ENCODE measurements at regions of chr15 and their contacts with region 1.

Region 1: DNA sequence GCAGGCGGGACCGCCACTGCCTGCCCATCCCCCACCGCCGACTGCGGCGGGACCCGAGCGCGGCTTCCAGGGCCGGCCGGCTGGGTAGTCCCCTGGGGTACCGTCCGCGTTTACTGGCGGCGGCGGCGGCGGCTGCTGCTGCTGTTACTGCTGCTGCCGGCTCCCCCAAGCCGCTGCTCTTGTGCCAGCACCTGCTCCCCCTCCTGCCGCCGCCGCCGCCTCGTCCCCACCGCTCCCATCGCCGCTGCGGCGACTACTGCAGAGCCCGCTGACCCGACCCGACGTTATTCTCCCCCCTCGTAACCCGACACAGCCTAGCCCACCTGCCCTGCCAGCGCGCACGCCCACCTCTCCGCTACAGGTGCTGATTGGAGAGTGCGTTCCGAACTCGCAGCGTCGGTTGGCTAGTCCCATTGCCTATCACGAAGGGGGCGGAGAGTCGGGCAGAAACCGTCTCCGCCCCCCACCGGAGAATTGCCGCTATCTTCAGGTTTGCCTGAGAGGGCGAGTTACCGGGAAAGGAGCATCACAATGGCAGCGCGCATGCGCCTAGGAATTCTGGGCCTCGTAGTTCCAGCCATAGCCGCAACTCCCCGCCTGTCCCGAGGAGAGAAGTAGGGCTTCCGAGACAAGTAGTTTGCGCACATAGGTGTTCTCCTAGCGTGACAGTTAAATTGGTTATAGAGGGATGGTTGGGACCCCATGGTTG is at the start of gene TTBK2:
- H3K4me3 ChIP-seq: peak within 1 kb of the TSS; percentile 79
- H3K27ac ChIP-seq: peak within 1 kb of the TSS; percentile 72
- H3K4me1 ChIP-seq: no peaks in the 10 kb centered on the region
- CTCF ChIP-seq: no peak

Region 2: GRCh38 chr15:42704492-42704926 is 216.2 kb before region 1 on chr15:
- CTCF ChIA-PET with region 1: interaction called, 10 read pairs
- POLR2A ChIA-PET with region 1: no interaction called
- H3K4me3 ChIP-seq: no peak overlapping the region
- H3K27ac ChIP-seq: no peak overlapping the region
- H3K4me1 ChIP-seq: no peaks in the 10 kb centered on the region
- CTCF ChIP-seq: peak; percentile 30; the same call in 1 of the 2 replicates

Region 3: DNA sequence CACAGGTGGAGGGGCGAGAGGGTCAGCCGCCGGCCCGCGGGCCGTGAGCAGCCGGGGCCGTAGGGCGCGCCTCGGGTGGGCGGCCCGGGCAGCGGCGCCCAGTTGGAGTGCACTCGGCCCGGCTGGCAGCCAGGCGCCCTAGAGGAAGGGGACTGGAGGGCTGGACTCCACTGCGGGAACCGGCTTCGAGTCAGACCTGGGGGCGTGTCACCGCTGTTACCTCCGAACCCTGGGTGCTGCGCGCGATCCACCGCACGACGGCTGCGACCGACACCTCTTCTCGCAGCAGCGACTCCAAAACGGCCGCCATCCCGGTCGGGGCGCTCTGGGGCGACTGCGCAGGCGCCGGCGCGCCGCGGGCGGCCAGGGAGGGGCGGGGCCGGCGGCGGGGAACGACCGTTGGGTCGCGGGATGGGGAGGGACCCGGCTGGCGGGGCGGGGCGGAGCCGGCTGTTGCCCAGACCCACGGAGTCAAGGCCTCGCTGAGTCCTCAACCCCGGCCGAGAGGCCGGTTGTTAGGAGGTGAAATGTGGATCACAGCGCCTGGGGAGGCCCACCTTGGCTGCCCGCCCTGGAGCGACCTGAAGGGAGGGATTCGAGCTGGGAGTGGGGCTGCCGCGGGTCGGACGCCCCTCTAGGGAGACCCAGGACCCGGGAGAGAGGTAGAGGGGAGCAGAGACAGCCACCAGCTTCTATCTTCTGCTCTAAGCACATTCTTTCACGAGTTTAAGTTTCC is 183.7 kb before region 1 on chr15 and contains the start of gene CDAN1:
- CTCF ChIA-PET with region 1: interaction called, 33 read pairs
- POLR2A ChIA-PET with region 1: no interaction called
- H3K4me3 ChIP-seq: peak within 1 kb of the TSS; percentile 85
- H3K27ac ChIP-seq: peak within 1 kb of the TSS; percentile 69
- H3K4me1 ChIP-seq: peaks cover 4% of the 10 kb centered on the region; the same call in 1 of the 2 replicates
- CTCF ChIP-seq: no peak

Region 4: DNA sequence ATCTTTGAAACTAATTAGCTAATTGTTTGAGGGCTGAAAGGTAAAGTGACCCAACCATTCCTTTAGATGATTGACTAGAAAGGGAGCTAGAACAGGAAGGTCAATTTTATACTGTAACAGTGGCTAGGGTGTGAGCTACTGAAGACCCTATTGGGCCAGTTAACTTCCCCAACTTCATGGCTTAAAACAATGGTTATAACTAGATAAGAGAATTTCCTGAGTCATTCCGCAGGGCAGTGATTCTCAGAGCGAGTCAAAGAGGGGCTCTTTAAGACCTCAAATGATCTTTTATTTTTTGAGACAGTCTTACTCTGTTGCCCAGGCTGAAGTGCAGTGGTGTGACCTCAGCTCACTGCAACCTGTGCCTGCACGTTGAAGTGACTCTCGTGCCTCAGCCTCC is 33.6 kb after region 1 on chr15:
- CTCF ChIA-PET with region 1: no interaction called
- POLR2A ChIA-PET with region 1: no interaction called
- H3K4me3 ChIP-seq: no peak overlapping the region
- H3K27ac ChIP-seq: no peak overlapping the region
- H3K4me1 ChIP-seq: no peaks in the 10 kb centered on the region
- CTCF ChIP-seq: no peak

Region 5: DNA sequence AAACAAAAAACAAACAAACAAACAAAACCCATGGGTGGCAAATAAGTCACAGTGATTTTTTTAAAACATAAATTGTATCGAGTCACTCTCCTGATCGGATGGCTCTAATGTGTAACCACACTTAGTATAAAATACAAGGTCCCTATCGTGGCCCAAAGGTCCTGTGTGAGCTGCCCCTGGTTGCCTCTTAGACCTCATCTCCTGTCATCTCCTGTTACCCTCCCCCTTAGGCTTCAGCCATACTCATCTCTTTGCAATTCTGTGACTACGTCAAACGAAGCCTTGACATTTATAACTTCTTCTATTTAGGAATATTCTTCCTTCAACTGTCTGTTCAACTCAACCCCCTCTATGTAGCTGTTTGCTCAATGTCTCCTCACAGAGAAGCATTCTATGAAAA is 43.8 kb after region 1 on chr15:
- CTCF ChIA-PET with region 1: no interaction called
- POLR2A ChIA-PET with region 1: no interaction called
- H3K4me3 ChIP-seq: no peak overlapping the region
- H3K27ac ChIP-seq: no peak overlapping the region
- H3K4me1 ChIP-seq: no peaks in the 10 kb centered on the region
- CTCF ChIP-seq: no peak

Measured in HEK293 (cell line).